ENCODE measurements at regions of chr17 and their contacts with region 1.

Region 1: DNA sequence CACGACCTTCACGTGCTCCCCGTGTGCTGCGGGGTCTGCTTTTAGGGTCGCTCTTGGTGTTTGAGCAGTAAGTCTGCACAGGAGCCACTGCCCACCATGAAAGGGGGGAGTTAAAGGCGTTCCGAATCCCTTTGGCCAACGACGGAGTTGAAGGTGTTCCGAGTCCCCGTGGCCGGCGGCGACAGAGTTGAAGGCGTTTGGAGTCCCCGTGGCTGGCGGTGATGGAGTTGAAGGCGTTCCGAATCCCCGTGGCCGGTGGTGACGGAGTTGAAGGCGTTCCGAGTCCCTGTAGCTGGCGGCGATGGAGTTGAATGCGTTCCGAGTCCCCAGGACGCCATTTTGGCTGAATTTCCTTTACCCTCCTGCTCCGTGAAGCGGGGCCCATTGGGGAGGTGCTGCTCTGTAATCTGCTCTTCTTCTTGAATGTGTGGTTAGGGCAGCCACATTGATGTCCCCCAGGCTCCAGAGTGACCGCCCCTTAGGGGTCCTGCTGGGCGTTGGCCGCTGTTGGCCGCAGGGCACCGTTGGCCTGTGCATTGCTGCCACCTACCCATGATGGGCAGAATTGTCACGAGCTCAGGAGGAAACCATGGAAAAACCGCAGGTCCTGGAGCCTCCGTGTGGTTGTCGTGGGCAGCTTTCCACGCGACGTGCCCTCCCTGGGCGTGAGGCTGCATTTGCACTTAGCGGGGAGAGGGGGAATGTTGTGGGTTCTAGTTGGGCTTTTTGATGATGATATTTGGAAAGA is 73.6 kb upstream of the ZNF750 start:
- DNase-seq: peak in 1 of 2 donors; percentile 44
- H3K4me3 ChIP-seq: no peak overlapping the region
- H3K27ac ChIP-seq: no peak overlapping the region
- H3K4me1 ChIP-seq: peaks cover 0 to 21% (median 18%) of the 10 kb centered on the region in 4 donors
- H3K27me3 ChIP-seq: no peaks in the 10 kb centered on the region
- CTCF ChIP-seq: peak in 4 of 7 experiments; percentile 12 to 57 (median 24)
- EP300 ChIP-seq: no peak
- POLR2A ChIP-seq: no peak

Region 2: DNA sequence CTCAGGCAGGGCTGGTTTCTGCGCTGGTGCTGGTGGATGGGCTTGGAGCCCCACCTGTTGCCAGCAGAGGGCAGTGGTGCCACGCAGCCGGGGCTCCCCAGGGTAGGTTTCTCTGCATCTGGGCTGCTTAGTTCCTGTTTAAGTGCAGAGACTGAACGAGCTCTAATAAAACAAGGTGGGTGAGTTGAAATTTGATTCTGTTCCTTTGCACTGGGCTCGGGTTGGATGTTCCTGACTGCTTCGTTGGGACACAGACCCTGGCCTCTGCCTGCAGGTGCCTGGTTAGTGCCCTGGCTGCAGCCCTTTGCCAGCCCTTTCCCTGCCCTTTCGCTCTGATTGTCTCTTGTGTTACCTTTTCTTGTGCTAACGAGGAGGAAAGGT is 131.6 kb before region 1 on chr17:
- intact Hi-C with region 1: loop called (anchors 5 kb)
- DNase-seq: peak; percentile 89 to 94
- H3K4me3 ChIP-seq: no peak overlapping the region
- H3K27ac ChIP-seq: peak overlapping the region in 3 of 5 donors; percentile 37 to 46 (median 41)
- H3K4me1 ChIP-seq: peaks cover 0 to 15% (median 2%) of the 10 kb centered on the region in 4 donors
- H3K27me3 ChIP-seq: no peaks in the 10 kb centered on the region
- CTCF ChIP-seq: peak in 5 of 7 experiments; percentile 83 to 96 (median 93)
- EP300 ChIP-seq: no peak
- POLR2A ChIP-seq: no peak

Region 3: DNA sequence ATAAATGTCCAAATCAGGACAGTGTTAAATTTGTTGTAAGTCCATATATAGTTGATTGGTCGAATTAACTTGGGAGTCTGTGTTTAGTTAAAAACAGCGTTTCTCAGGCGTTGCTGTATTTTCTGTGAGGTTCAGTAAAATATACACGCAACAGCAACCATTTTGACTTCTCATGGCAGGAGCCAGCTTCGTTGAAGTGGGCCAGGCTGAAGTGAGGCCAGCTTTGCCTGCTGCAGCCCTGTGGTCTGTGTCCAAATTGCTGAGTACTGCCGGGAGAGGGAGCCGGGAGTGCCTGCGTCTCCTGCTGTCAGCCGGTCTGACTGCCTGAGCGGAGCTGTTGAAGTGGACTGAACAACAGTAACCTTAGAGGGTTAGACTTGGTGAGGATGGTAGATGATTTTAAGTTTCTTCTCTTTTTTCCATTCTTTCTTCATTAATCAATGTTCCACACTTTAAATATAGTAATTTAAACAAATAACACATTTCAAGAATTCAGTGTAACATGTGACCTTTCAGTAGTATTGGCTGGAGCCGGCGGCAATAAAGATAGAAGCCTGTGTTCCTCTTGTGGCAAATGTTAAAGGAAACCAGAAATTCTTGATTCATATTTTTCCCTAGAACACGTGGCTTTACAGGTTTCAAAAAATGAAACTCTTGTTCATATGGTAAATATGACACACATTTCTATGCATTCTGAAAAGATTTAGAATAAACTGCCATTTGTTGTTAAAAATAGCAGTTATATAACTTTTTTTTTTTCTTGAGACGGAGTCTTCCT is 36.7 kb before region 1 on chr17:
- intact Hi-C with region 1: loop called (anchors 5 kb)
- DNase-seq: peak; percentile 86 to 93
- H3K4me3 ChIP-seq: no peak overlapping the region
- H3K27ac ChIP-seq: peak overlapping the region; percentile 68 to 86 (median 81)
- H3K4me1 ChIP-seq: peaks cover 46 to 85% (median 68%) of the 10 kb centered on the region in 4 donors
- H3K27me3 ChIP-seq: no peaks in the 10 kb centered on the region
- CTCF ChIP-seq: peak in 5 of 7 experiments; percentile 26 to 69 (median 47)
- EP300 ChIP-seq: no peak
- POLR2A ChIP-seq: no peak

Region 4: DNA sequence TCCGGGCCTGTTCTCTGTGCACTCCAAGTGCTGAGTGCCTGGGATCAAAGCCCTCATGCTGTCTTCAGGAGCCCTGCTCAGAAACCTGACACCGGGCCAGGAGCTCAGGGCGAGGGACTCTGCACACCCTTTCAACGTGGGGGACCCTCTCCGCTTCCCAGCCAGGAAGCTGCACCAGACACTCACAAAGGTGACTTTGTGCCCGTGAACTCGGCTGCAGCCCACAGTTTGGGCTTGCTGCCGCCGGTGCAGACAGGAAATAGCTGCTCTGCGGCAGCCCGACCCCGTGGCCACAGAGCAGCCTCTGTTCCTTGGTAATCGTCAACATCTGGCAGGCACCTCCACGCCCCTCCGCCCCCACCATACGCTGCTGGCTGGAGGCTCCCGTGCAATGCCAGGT is 72.5 kb after region 1 on chr17:
- intact Hi-C with region 1: no loop called
- DNase-seq: peak; percentile 38 to 85
- H3K4me3 ChIP-seq: peak overlapping the region in 1 of 4 donors; percentile 1
- H3K27ac ChIP-seq: no peak overlapping the region
- H3K4me1 ChIP-seq: peaks cover 0 to 14% (median 5%) of the 10 kb centered on the region in 4 donors
- H3K27me3 ChIP-seq: no peaks in the 10 kb centered on the region
- CTCF ChIP-seq: no peak
- EP300 ChIP-seq: no peak
- POLR2A ChIP-seq: no peak

Region 5: GRCh38 chr17:83014940-83015910 is 101.8 kb after region 1 on chr17:
- intact Hi-C with region 1: no loop called
- DNase-seq: no peak
- H3K4me3 ChIP-seq: no peak overlapping the region
- H3K27ac ChIP-seq: no peak overlapping the region
- H3K4me1 ChIP-seq: peaks cover 0 to 6% (median 0%) of the 10 kb centered on the region in 4 donors
- H3K27me3 ChIP-seq: no peaks in the 10 kb centered on the region
- CTCF ChIP-seq: no peak
- EP300 ChIP-seq: no peak
- POLR2A ChIP-seq: no peak